ENCODE measurements at regions of chr20 and their contacts with region 1.

Region 1: GRCh38 chr20:58589169-58589568 is 61.9 kb upstream of the STX16 start:
- DNase-seq: no peak
- H3K4me3 ChIP-seq: no peak overlapping the region
- H3K27ac ChIP-seq: no peak overlapping the region
- H3K4me1 ChIP-seq: no peaks in the 10 kb centered on the region
- H3K27me3 ChIP-seq: 0 out of 2 replicates have a peak, but pooled peaks cover 8% of the 10 kb centered on the region
- CTCF ChIP-seq: no peak

Region 2: DNA sequence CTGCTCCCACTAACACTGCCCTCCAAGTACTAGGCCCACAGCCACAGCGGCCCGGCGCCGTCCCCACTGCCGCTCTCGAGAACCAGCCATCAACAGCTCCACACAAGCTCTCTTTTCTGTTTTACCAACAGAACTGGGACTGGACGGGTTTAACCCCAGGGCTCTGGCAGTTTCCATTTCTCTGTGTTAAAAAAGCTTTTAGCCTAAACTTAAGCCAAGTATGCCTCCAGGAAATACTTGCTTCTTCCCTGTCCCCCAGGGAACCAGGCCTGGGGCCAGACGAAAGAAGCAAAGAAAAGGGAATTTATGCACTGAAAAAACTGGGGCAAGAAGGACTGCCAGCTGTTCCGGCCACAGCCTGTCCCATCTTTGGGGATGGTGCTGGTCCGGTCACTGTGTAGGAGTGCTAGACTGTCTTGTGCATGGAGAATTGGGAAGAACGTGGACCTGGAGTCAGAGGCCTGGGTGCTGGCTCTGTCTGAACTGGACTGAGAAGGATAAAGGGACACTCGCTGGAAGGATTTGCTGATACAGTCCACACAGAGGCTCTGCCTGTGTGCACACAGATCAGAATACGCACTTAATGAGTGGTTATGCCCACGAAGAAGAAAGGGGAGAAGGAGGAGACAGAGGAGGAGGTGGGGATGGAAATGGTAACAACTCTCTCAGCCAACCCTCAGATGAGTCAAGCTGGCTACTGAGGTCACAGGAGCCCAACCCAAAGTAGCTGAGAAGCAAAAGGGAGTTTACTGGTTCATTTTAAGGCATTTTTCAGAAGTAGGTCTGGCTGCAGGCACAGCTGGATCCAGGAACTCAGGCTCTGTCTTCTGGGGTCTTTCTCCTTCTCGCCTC is 624.9 kb before region 1 on chr20:
- CTCF ChIA-PET with region 1: no interaction called
- POLR2A ChIA-PET with region 1: no interaction called
- intact Hi-C with region 1: no loop called
- DNase-seq: no peak
- H3K4me3 ChIP-seq: no peak overlapping the region
- H3K27ac ChIP-seq: no peak overlapping the region
- H3K4me1 ChIP-seq: no peaks in the 10 kb centered on the region
- H3K27me3 ChIP-seq: no peaks in the 10 kb centered on the region
- CTCF ChIP-seq: no peak

Region 3: GRCh38 chr20:58570204-58570859 is 18.8 kb before region 1 on chr20:
- CTCF ChIA-PET with region 1: no interaction called
- POLR2A ChIA-PET with region 1: no interaction called
- intact Hi-C with region 1: loop called (anchors 1 kb)
- DNase-seq: no peak
- H3K4me3 ChIP-seq: no peak overlapping the region
- H3K27ac ChIP-seq: no peak overlapping the region
- H3K4me1 ChIP-seq: no peaks in the 10 kb centered on the region
- H3K27me3 ChIP-seq: no peaks in the 10 kb centered on the region
- CTCF ChIP-seq: no peak

Region 4: GRCh38 chr20:58790454-58790853 is 201.3 kb after region 1 on chr20:
- CTCF ChIA-PET with region 1: no interaction called
- POLR2A ChIA-PET with region 1: no interaction called
- intact Hi-C with region 1: no loop called
- DNase-seq: no peak
- H3K4me3 ChIP-seq: no peak overlapping the region
- H3K27ac ChIP-seq: no peak overlapping the region
- H3K4me1 ChIP-seq: no peaks in the 10 kb centered on the region
- H3K27me3 ChIP-seq: peaks cover 96% of the 10 kb centered on the region
- CTCF ChIP-seq: no peak

Region 5: GRCh38 chr20:59386809-59387208 is 797.6 kb after region 1 on chr20:
- CTCF ChIA-PET with region 1: no interaction called
- POLR2A ChIA-PET with region 1: no interaction called
- intact Hi-C with region 1: no loop called
- DNase-seq: no peak
- H3K4me3 ChIP-seq: no peak overlapping the region
- H3K27ac ChIP-seq: no peak overlapping the region
- H3K4me1 ChIP-seq: no peaks in the 10 kb centered on the region
- H3K27me3 ChIP-seq: peaks cover 77% of the 10 kb centered on the region
- CTCF ChIP-seq: no peak